SK-N-SH (cell line): ENCODE measurements at regions of chr7 and their contacts with region 1.

Region 1: GRCh38 chr7:130803127-130803526 is 69.1 kb upstream of the KLF14 start:
- DNase-seq: no peak
- H3K4me3 ChIP-seq: no peak overlapping the region
- H3K27ac ChIP-seq: no peak overlapping the region
- H3K4me1 ChIP-seq: peaks cover 0 to 7% of the 10 kb centered on the region in 2 experiments; a peak in 1 of 4 replicates
- H3K27me3 ChIP-seq: no peaks in the 10 kb centered on the region; the same call in 1 of the 2 replicates
- CTCF ChIP-seq: no peak
- EP300 ChIP-seq: no peak
- RAD21 ChIP-seq: no peak

Region 2: GRCh38 chr7:130505753-130506152 is 297.4 kb before region 1 on chr7:
- CTCF ChIA-PET with region 1: no interaction called
- POLR2A ChIA-PET with region 1: no interaction called
- DNase-seq: no peak
- H3K4me3 ChIP-seq: no peak overlapping the region
- H3K27ac ChIP-seq: no peak overlapping the region
- H3K4me1 ChIP-seq: no peaks in the 10 kb centered on the region
- H3K27me3 ChIP-seq: no peaks in the 10 kb centered on the region
- CTCF ChIP-seq: no peak
- EP300 ChIP-seq: no peak
- RAD21 ChIP-seq: no peak

Region 3: DNA sequence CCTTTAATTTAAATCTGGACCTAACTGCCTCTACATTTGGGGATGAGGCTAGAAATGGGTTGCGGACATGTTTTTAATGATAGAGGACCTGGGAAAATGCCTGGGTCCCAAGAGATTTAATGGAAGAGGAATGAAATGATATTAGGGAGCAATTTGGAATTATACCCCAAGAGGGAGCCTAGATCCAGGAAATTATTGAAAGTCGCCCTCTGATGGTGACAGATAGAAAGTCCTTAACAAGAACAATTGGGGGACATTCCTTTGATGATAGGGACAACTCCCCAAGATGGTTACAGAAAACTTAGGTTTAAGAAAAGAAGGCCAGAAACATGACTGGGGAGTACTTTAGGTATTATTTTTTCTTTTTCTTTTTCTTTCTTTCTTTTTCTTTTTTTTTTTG is 107.3 kb before region 1 on chr7:
- CTCF ChIA-PET with region 1: no interaction called
- POLR2A ChIA-PET with region 1: no interaction called
- DNase-seq: peak; percentile 44
- H3K4me3 ChIP-seq: no peak overlapping the region
- H3K27ac ChIP-seq: no peak overlapping the region
- H3K4me1 ChIP-seq: no peaks in the 10 kb centered on the region
- H3K27me3 ChIP-seq: peaks cover 7% of the 10 kb centered on the region; the same call in 1 of the 2 replicates
- CTCF ChIP-seq: peak; percentile 78
- EP300 ChIP-seq: no peak
- RAD21 ChIP-seq: peak; percentile 66

Region 4: GRCh38 chr7:130831817-130832481 is 28.8 kb after region 1 on chr7:
- CTCF ChIA-PET with region 1: interaction called, 12 read pairs
- POLR2A ChIA-PET with region 1: no interaction called
- DNase-seq: peak; percentile 74
- H3K4me3 ChIP-seq: no peak overlapping the region; a peak in 1 of 4 replicates
- H3K27ac ChIP-seq: no peak overlapping the region
- H3K4me1 ChIP-seq: no peaks in the 10 kb centered on the region
- H3K27me3 ChIP-seq: no peaks in the 10 kb centered on the region
- CTCF ChIP-seq: peak; percentile 97
- EP300 ChIP-seq: no peak
- RAD21 ChIP-seq: peak; percentile 95